ENCODE measurements at regions of chr15 and their contacts with region 1.

Region 1: GRCh38 chr15:40893733-40894688 is at the start of gene VPS18:
- DNase-seq: peak; percentile 98
- H3K4me3 Mint-ChIP-seq: peak within 1 kb of the TSS; percentile 97
- H3K27ac Mint-ChIP-seq: peak within 1 kb of the TSS; percentile 92
- H3K4me1 Mint-ChIP-seq: peaks cover 38% of the 10 kb centered on the region
- H3K27me3 Mint-ChIP-seq: peaks cover 4% of the 10 kb centered on the region
- total RNA-seq, gene VPS18: 15.0 and 16.7 TPM in 2 replicates

Region 2: GRCh38 chr15:40593588-40594428 is 300.2 kb before region 1 on chr15 and contains the start of gene KNL1:
- intact Hi-C with region 1: loop called (anchors 5 kb)
- DNase-seq: peak; percentile 88
- H3K4me3 Mint-ChIP-seq: peak within 1 kb of the TSS; percentile 93
- H3K27ac Mint-ChIP-seq: peak within 1 kb of the TSS; percentile 98
- H3K4me1 Mint-ChIP-seq: peaks cover 45% of the 10 kb centered on the region
- H3K27me3 Mint-ChIP-seq: peaks cover 2% of the 10 kb centered on the region
- total RNA-seq, gene KNL1: 21.6 and 22.4 TPM in 2 replicates

Region 3: GRCh38 chr15:40702077-40702476 is 191.9 kb before region 1 on chr15:
- intact Hi-C with region 1: loop called (anchors 2 kb)
- DNase-seq: no peak
- H3K4me3 Mint-ChIP-seq: no peak overlapping the region
- H3K27ac Mint-ChIP-seq: peak overlapping the region; percentile 18
- H3K4me1 Mint-ChIP-seq: peaks cover 36% of the 10 kb centered on the region
- H3K27me3 Mint-ChIP-seq: no peaks in the 10 kb centered on the region

Region 4: GRCh38 chr15:40843885-40844695 is 49.9 kb before region 1 on chr15 and contains the start of gene SPINT1:
- intact Hi-C with region 1: loop called (anchors 5 kb)
- DNase-seq: peak; percentile 27
- H3K4me3 Mint-ChIP-seq: peak within 1 kb of the TSS; percentile 87
- H3K27ac Mint-ChIP-seq: peak within 1 kb of the TSS; percentile 75
- H3K4me1 Mint-ChIP-seq: peaks cover 33% of the 10 kb centered on the region
- H3K27me3 Mint-ChIP-seq: peaks cover 15% of the 10 kb centered on the region
- total RNA-seq, gene SPINT1: 11.0 and 12.4 TPM in 2 replicates

Region 5: DNA sequence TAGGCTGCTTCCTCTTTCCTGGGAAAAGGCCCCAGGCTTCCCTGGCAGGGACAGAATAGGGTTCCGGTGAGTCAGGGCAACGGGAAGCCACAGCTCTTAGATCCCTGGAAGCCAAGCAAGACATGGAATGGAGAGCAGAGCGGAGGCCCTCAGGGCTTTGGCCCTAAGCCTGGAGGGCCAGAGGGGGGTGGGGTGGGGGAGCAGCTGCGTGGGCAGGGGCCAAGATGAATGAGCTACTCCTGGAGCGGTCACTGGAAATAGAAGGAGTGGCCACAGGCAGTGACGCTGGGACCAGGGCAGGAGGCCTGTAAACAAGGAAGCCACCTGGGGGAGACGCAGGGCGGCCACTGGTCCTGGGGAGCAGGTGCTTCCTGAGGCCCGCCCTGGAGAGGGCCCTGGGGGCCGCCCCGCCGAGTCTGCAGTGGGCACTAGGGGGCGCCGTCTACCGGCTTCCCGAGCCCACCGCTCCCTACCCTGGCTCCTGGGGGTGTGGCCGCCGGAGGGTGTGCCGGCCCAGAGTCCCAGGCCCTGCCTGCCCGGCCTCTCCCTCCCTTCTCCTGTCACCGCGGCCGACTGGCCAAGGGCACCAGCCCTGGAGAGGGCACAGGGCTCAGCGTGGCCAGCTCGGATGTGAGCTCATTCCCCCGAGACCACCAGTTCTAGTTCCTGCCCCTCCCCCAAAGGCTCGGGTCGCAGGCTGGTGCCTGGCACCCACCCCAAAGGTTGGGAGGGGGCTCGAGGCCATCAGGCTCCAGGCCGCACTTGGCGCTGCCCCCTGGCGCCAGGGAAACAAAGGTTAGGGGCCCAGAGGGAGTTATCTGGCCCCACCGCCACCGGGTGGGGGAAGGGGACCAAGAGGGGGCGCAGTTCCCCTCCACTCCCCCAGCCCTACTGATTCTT is 12.3 kb after region 1 on chr15:
- intact Hi-C with region 1: loop called (anchors 1 kb)
- DNase-seq: peak; percentile 55
- H3K4me3 Mint-ChIP-seq: no peak overlapping the region
- H3K27ac Mint-ChIP-seq: no peak overlapping the region
- H3K4me1 Mint-ChIP-seq: peaks cover 21% of the 10 kb centered on the region
- H3K27me3 Mint-ChIP-seq: no peaks in the 10 kb centered on the region

Region 6: GRCh38 chr15:40952901-40953712 is 59.1 kb after region 1 on chr15 and contains the start of gene CHAC1:
- intact Hi-C with region 1: no loop called
- DNase-seq: peak; percentile 96
- H3K4me3 Mint-ChIP-seq: peak within 1 kb of the TSS; percentile 92
- H3K27ac Mint-ChIP-seq: peak within 1 kb of the TSS; percentile 89
- H3K4me1 Mint-ChIP-seq: peaks cover 48% of the 10 kb centered on the region
- H3K27me3 Mint-ChIP-seq: no peaks in the 10 kb centered on the region
- total RNA-seq, gene CHAC1: 11.7 and 12.4 TPM in 2 replicates

Region 7: DNA sequence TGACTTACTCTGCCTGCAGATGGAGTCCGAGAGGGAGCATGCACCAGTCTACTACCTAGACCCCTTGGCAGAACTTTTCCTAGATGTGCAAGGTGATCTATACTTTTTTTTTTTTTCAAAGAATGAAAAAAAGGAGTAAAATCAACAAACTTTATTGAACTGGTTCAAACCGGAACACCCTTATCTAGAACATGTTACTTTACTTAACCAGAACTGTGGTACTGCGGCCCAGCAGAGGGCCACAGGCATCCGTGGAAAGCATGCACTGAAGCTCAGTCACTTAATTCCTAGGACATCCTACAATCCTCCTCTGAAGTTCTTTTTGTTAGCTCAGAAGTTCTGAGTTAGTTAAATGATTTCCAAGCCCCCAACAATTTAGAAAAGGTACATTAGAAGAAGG is 80.9 kb after region 1 on chr15:
- intact Hi-C with region 1: no loop called
- DNase-seq: no peak
- H3K4me3 Mint-ChIP-seq: no peak overlapping the region
- H3K27ac Mint-ChIP-seq: no peak overlapping the region
- H3K4me1 Mint-ChIP-seq: no peaks in the 10 kb centered on the region
- H3K27me3 Mint-ChIP-seq: no peaks in the 10 kb centered on the region

Measured in activated T-helper 1 cell treated with anti-CD3 and anti-CD28 coated beads, Interleukin-12 subunit alpha, Interleukin-12 subunit beta, Interleukin-2, Interleukin-4 antibody, amounts not matched to agents 30 ng/mL and 10 ng/mL and 1 ng/mL, durations not matched to agents 14 hours and 24 hours and 36 hours (primary cell).